Mammary epithelial cell (primary cell): ENCODE measurements at regions of chr20 and their contacts with region 1.

Region 1: GRCh38 chr20:58179432-58180099 is 48.9 kb downstream of the ANKRD60 start:
- DNase-seq: peak; percentile 25
- H3K4me3 ChIP-seq: peak overlapping the region in 2 of 3 experiments; percentile 37 to 40
- H3K27ac ChIP-seq: no peak overlapping the region
- H3K4me1 ChIP-seq: peaks cover 11% of the 10 kb centered on the region
- H3K27me3 ChIP-seq: no peaks in the 10 kb centered on the region
- CTCF ChIP-seq: peak; percentile 66 to 92

Region 2: GRCh38 chr20:57514273-57514751 is 665.3 kb before region 1 on chr20:
- CTCF ChIA-PET with region 1: no interaction called
- dilution Hi-C with region 1: loop called (anchors 10 kb)
- in situ Hi-C with region 1: no loop called
- intact Hi-C with region 1: no loop called
- DNase-seq: peak; percentile 57
- H3K4me3 ChIP-seq: no peak overlapping the region
- H3K27ac ChIP-seq: no peak overlapping the region
- H3K4me1 ChIP-seq: no peaks in the 10 kb centered on the region
- H3K27me3 ChIP-seq: no peaks in the 10 kb centered on the region
- CTCF ChIP-seq: peak; percentile 65 to 83

Region 3: GRCh38 chr20:57546956-57547649 is 632.5 kb before region 1 on chr20:
- CTCF ChIA-PET with region 1: no interaction called
- dilution Hi-C with region 1: no loop called
- in situ Hi-C with region 1: no loop called
- intact Hi-C with region 1: no loop called
- DNase-seq: peak; percentile 61
- H3K4me3 ChIP-seq: no peak overlapping the region
- H3K27ac ChIP-seq: no peak overlapping the region
- H3K4me1 ChIP-seq: no peaks in the 10 kb centered on the region
- H3K27me3 ChIP-seq: no peaks in the 10 kb centered on the region
- CTCF ChIP-seq: no peak

Region 4: DNA sequence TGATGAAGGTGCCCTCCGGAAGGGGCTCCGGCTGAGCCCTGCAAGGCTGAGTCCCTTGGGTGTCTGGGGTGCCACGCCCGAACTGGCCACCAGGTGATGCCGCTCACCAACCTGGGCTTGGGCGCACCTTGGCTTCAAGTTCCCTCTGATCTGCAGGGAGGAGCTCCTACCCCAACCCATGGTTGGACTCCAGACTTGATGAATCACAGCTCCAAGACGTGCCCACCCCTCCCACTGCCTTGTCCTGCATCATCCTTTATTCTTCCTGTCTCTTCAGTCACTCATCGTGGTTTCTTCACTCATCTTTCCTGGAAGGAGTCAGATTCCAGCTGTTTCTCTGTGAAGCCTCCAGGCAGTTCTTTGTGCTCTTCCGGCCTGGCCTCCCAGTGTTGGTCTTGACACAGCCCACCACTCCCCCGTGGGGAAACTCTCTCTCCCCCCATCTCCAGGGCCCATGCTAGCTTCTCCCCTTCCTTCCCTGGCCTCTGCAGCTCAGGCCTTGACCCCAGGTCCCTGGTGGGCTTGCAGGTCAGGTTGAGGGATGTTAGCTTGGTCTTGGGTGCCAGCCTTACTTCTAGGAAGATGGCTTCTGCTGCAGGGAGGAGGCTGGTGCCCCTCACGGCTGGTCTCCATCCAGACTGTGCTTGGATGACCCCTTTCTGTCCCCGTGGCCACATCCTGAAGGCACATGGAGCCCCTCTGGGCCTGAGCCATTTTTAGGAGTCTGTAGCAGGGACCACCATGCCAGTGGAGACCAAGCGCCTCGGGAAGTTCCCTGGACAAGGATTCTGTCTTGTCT is 556.8 kb before region 1 on chr20:
- CTCF ChIA-PET with region 1: interaction called, 4 read pairs
- dilution Hi-C with region 1: loop called (anchors 25 kb)
- in situ Hi-C with region 1: no loop called
- intact Hi-C with region 1: loop called (anchors 1 kb)
- DNase-seq: peak; percentile 91
- H3K4me3 ChIP-seq: no peak overlapping the region
- H3K27ac ChIP-seq: no peak overlapping the region
- H3K4me1 ChIP-seq: peaks cover 22% of the 10 kb centered on the region
- H3K27me3 ChIP-seq: no peaks in the 10 kb centered on the region
- CTCF ChIP-seq: peak; percentile 99 to 100

Region 5: DNA sequence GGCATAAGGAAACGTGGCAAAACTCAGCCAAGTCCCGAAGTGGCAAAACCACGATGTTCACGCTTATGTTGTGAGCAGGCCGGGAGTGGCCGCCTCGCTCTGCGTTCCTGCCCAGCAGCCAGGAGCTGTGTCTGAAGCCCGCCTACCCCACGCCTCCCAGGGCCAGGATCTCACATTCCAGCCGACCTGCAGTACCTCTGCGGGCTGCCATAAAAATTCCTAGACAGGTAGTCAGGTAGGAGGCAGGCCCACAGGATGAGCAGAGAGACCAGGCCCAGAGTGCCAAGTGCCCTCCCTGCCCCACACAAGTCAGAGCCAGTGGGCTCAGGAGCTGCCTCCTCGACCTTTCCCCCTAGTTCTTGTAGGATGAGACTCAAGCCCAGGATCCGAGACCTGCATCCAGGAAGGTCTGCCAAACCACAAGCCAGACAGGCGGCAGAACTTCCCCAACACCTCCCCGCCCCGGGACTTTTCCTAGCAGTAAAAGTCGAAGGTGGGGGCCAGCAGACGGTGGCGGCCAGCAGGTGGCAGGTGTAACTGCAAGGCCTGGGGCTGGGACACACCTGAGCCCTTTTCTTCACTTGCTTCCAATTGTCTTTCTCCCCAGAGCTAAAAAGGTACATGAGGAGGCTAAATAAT is 486.4 kb before region 1 on chr20:
- CTCF ChIA-PET with region 1: interaction called, 3 read pairs
- dilution Hi-C with region 1: no loop called
- in situ Hi-C with region 1: no loop called
- intact Hi-C with region 1: loop called (anchors 1 kb)
- DNase-seq: peak; percentile 99
- H3K4me3 ChIP-seq: no peak overlapping the region
- H3K27ac ChIP-seq: peak overlapping the region; percentile 88
- H3K4me1 ChIP-seq: peaks cover 93% of the 10 kb centered on the region
- H3K27me3 ChIP-seq: no peaks in the 10 kb centered on the region
- CTCF ChIP-seq: peak; percentile 49 to 69

Region 6: DNA sequence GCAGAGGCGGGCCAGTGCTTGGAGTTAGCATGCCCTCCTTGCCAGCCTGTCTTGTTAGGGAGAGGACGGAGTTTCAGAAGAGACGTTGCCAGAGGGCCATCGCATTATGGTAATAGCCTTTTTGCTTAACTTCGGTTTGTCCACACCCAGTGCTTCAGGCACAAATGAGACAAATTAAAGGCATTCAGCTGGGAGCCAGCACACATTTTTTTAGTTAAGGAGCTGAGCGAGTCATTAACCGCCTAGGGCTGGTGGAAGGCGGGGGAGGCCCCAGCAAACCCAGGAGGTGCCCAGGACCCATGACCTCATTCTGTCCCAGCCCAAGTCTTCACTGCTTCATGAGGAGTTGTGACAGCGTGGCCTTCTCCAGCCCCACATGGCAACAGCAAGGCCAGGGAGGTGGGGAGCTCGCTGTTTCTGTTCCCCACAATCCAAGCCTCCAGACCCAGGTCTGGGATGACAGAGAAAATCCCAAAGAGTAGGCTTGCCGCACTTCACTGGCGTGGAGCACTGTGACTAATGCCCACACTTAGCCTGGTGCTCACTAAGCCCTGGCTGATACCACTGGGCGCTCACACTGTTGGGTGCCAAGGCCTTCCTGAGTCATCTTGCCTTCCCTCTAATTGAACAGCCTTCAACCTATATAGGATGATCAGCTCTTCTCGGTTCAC is 188.2 kb before region 1 on chr20:
- CTCF ChIA-PET with region 1: interaction called, 3 read pairs
- dilution Hi-C with region 1: no loop called
- in situ Hi-C with region 1: no loop called
- intact Hi-C with region 1: loop called (anchors 2 kb)
- DNase-seq: peak; percentile 99
- H3K4me3 ChIP-seq: no peak overlapping the region
- H3K27ac ChIP-seq: peak overlapping the region; percentile 94
- H3K4me1 ChIP-seq: peaks cover 49% of the 10 kb centered on the region
- H3K27me3 ChIP-seq: no peaks in the 10 kb centered on the region
- CTCF ChIP-seq: no peak

Region 7: GRCh38 chr20:58102260-58102659 is 77.3 kb before region 1 on chr20:
- CTCF ChIA-PET with region 1: no interaction called
- dilution Hi-C with region 1: loop called (anchors 5 kb)
- in situ Hi-C with region 1: no loop called
- intact Hi-C with region 1: loop called (anchors 5 kb)
- DNase-seq: peak; percentile 88
- H3K4me3 ChIP-seq: no peak overlapping the region
- H3K27ac ChIP-seq: peak overlapping the region; percentile 97
- H3K4me1 ChIP-seq: peaks cover 24% of the 10 kb centered on the region
- H3K27me3 ChIP-seq: no peaks in the 10 kb centered on the region
- CTCF ChIP-seq: no peak

Region 8: GRCh38 chr20:58236612-58237330 is 57.2 kb after region 1 on chr20:
- CTCF ChIA-PET with region 1: no interaction called
- dilution Hi-C with region 1: no loop called
- in situ Hi-C with region 1: no loop called
- intact Hi-C with region 1: no loop called
- DNase-seq: peak; percentile 58
- H3K4me3 ChIP-seq: peak overlapping the region; percentile 51 to 74 (median 52)
- H3K27ac ChIP-seq: peak overlapping the region; percentile 48
- H3K4me1 ChIP-seq: peaks cover 8% of the 10 kb centered on the region
- H3K27me3 ChIP-seq: no peaks in the 10 kb centered on the region
- CTCF ChIP-seq: peak; percentile 92 to 98

Region 9: GRCh38 chr20:58271606-58272402 is 92.2 kb after region 1 on chr20:
- CTCF ChIA-PET with region 1: no interaction called
- dilution Hi-C with region 1: no loop called
- in situ Hi-C with region 1: no loop called
- intact Hi-C with region 1: no loop called
- DNase-seq: no peak
- H3K4me3 ChIP-seq: no peak overlapping the region
- H3K27ac ChIP-seq: no peak overlapping the region
- H3K4me1 ChIP-seq: no peaks in the 10 kb centered on the region
- H3K27me3 ChIP-seq: no peaks in the 10 kb centered on the region
- CTCF ChIP-seq: no peak

Region 10: DNA sequence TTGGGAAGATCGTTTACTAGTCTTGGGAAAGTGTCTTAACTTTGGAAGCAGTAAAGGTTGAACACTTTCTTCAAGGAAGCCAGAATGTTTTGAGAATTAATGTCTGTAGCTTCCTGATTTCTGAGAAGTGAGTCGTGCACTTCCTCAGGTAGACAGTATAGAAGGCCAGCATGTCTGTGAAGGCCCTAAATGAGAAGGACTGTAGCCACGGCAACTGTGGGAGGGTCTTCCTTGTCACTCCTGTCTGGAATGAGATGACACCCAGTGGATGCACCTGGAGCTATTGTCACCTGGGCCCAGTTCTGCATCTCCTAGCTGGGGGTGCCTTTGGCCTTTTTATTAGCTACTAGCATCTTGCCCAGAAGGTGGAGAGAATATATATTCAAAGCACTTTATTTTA is 480.3 kb after region 1 on chr20:
- CTCF ChIA-PET with region 1: no interaction called
- dilution Hi-C with region 1: no loop called
- in situ Hi-C with region 1: no loop called
- intact Hi-C with region 1: no loop called
- DNase-seq: peak; percentile 11
- H3K4me3 ChIP-seq: no peak overlapping the region
- H3K27ac ChIP-seq: no peak overlapping the region
- H3K4me1 ChIP-seq: peaks cover 14% of the 10 kb centered on the region
- H3K27me3 ChIP-seq: no peaks in the 10 kb centered on the region
- CTCF ChIP-seq: no peak